ENCODE measurements at regions of chr17 and their contacts with region 1.

Region 1: GRCh38 chr17:8041249-8041928 is 2.5 kb downstream of the ALOX15B start:
- DNase-seq: peak; percentile 43 to 51
- H3K4me3 ChIP-seq: no peak overlapping the region
- H3K27ac ChIP-seq: no peak overlapping the region
- H3K4me1 ChIP-seq: peaks cover 5% of the 10 kb centered on the region; the same call in 1 of the 2 replicates
- H3K27me3 ChIP-seq: no peaks in the 10 kb centered on the region
- CTCF ChIP-seq: peak; percentile 77

Region 2: DNA sequence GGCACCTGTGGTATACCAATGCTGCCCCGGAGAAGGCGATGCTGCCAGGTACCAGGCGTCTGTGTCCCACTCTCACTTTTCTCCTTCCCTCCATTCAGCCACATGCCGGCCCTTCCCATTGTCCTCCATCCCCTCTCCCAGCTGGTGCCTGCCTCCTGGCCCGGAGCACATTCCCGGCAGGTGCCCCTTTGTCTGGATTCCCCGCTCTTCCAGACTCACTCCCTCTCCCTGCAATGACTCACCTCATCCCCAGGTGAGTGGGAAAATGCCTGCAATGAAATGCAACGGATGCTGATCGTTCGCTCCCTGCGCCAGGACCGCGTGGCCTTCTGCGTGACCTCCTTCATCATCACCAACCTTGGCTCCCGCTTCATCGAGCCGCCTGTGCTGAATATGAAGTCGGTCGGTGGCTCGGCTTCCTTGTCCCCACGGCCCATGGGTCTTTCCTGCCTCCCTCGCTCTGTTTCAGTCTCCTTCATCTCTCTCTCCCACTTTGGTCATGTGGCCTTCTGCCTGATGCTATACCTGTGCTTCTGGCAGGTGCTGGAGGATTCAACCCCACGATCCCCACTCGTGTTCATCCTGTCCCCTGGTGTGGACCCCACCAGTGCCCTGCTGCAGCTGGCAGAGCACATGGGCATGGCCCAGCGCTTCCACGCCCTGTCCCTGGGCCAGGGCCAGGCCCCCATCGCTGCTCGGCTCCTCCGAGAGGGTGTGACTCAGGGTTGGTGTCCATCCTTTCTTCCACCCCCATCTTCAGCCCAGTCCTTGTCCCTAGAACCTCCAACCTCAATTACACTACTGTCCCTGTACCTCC is 217.6 kb before region 1 on chr17:
- CTCF ChIA-PET with region 1: interaction called, 4 read pairs
- POLR2A ChIA-PET with region 1: no interaction called
- intact Hi-C with region 1: loop called (anchors 1 kb)
- DNase-seq: no peak
- H3K4me3 ChIP-seq: no peak overlapping the region
- H3K27ac ChIP-seq: no peak overlapping the region
- H3K4me1 ChIP-seq: no peaks in the 10 kb centered on the region
- H3K27me3 ChIP-seq: no peaks in the 10 kb centered on the region
- CTCF ChIP-seq: no peak

Region 3: GRCh38 chr17:7862692-7863437 is 178.5 kb before region 1 on chr17:
- CTCF ChIA-PET with region 1: interaction called, 4 read pairs
- POLR2A ChIA-PET with region 1: no interaction called
- intact Hi-C with region 1: loop called (anchors 1 kb)
- DNase-seq: peak in 1 of 2 experiments; percentile 49
- H3K4me3 ChIP-seq: no peak overlapping the region
- H3K27ac ChIP-seq: no peak overlapping the region
- H3K4me1 ChIP-seq: peaks cover 7% of the 10 kb centered on the region; the same call in 1 of the 2 replicates
- H3K27me3 ChIP-seq: no peaks in the 10 kb centered on the region
- CTCF ChIP-seq: peak; percentile 87

Region 4: GRCh38 chr17:7989781-7990655 is 51.4 kb before region 1 on chr17:
- CTCF ChIA-PET with region 1: interaction called, 13 read pairs
- POLR2A ChIA-PET with region 1: interaction called, 8 read pairs
- intact Hi-C with region 1: loop called (anchors 1 kb)
- DNase-seq: peak; percentile 40 to 92
- H3K4me3 ChIP-seq: peak overlapping the region; percentile 62
- H3K27ac ChIP-seq: no peak overlapping the region
- H3K4me1 ChIP-seq: no peaks in the 10 kb centered on the region; the same call in 1 of the 2 replicates
- H3K27me3 ChIP-seq: no peaks in the 10 kb centered on the region
- CTCF ChIP-seq: peak; percentile 83

Region 5: GRCh38 chr17:8016632-8017478 is 24.5 kb before region 1 on chr17:
- CTCF ChIA-PET with region 1: interaction called, 9 read pairs
- POLR2A ChIA-PET with region 1: no interaction called
- intact Hi-C with region 1: loop called (anchors 1 kb)
- DNase-seq: peak; percentile 35 to 68
- H3K4me3 ChIP-seq: peak overlapping the region; percentile 50
- H3K27ac ChIP-seq: no peak overlapping the region
- H3K4me1 ChIP-seq: no peaks in the 10 kb centered on the region
- H3K27me3 ChIP-seq: no peaks in the 10 kb centered on the region
- CTCF ChIP-seq: peak; percentile 70

Region 6: GRCh38 chr17:8029135-8029534 is 12.3 kb before region 1 on chr17:
- CTCF ChIA-PET with region 1: interaction called, 11 read pairs
- POLR2A ChIA-PET with region 1: no interaction called
- intact Hi-C with region 1: no loop called
- DNase-seq: peak; percentile 61 to 74
- H3K4me3 ChIP-seq: no peak overlapping the region
- H3K27ac ChIP-seq: no peak overlapping the region
- H3K4me1 ChIP-seq: peaks cover 9% of the 10 kb centered on the region
- H3K27me3 ChIP-seq: no peaks in the 10 kb centered on the region
- CTCF ChIP-seq: no peak